ENCODE measurements at regions of chr5 and their contacts with region 1.

Region 1: DNA sequence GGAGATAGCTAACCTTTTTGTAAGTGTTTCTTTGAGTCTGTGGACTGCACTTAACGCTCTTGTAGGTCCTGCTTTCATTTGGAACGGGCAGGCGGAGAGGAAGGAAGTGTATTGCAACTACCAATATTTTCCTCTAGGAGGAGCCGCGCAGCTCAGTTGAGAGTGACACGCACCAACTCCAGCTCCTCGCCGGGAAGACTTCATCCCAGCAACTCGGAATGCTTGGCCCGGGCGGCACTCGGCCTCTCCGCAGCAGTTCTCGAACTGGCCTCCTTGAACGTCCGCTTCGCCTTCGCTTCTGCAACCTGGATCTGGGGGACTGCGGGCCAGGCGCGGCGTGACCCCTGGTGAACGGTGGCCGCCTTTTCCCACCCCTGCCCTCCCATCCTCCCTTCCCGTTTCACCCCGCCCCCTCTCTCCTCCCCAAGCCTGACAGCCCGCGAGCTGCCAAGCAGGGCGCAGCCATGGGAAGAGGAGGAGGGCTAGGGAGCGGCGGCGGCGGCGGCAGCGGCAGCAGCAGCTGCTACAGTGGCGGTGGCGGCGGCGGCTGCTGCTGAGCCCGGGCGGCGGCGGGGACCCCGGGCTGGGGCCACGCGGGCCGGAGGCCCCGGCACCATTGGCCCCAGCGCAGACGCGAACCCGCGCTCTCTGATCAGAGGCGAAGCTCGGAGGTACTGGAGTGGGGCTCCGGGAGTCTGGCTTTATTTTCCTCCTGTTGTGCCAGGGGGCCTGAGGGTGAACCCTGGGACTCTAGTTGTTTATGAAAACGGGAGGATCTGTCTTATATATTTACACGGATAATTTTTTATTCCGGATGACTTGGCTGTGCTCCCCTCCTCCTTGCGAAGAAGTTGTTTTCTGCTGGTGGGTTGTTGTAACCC is at the start of gene GHR:
- DNase-seq: peak; percentile 94
- total RNA-seq, gene GHR: 11.4 TPM

Region 2: DNA sequence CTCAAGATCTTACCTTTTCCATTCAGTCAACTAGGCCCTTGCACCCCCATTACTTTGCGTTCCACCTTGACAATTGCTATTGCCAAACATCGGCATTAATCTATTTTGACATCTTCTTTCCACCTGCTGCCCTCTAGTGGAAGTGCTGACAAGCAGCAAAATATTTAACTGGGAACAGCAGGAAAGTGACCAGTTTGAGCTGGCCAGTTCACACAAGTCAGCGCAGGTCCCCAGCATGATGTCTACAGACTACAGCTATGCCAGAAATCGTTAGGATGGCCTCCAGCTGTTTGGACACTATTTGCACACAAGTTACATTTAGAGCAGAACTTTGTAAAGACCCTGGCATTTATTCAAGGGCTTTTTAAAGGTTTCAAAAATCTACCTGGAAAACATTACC is 159.8 kb after region 1 on chr5:
- intact Hi-C with region 1: loop called in 1 of 2 experiments (anchors 10 kb)
- DNase-seq: no peak

Region 3: GRCh38 chr5:44178414-44178813 is 1754.9 kb after region 1 on chr5:
- intact Hi-C with region 1: no loop called
- DNase-seq: no peak